ENCODE measurements at regions of chr6 and their contacts with region 1.

Region 1: DNA sequence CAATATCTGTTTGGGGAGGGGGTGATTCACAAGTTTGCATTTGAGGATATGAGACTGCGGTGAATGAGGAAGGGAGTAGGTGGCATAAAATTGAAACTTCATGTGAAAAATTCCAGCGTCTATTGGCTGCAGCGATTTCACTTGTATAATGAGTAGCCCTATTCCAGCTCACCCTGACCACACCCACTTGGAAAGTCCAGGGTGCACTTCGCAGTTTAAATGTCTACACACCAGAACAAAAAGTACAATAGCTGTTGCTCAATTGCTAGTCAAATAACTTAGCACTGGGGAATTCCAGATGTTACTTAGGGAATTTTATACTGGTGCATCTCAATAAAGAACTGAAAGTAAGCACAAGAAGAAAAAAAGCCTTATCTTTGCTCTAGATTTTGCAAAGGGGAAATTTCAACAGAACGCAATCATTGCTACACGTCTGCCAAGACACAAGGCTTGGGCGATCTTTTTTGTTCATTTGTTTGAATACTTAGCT is 6.3 kb downstream of the TNFAIP3 start:
- DNase-seq: peak; percentile 88
- H3K4me3 ChIP-seq: no peak overlapping the region
- H3K27ac ChIP-seq: peak overlapping the region; percentile 53
- H3K4me1 ChIP-seq: peaks cover 41% of the 10 kb centered on the region
- H3K27me3 ChIP-seq: no peaks in the 10 kb centered on the region
- CTCF ChIP-seq: no peak
- POLR2A ChIP-seq: peak; percentile 22

Region 2: GRCh38 chr6:137883400-137884148 is 10.3 kb after region 1 on chr6:
- CTCF ChIA-PET with region 1: interaction called, 8 read pairs
- POLR2A ChIA-PET with region 1: no interaction called
- dilution Hi-C with region 1: no loop called
- intact Hi-C with region 1: loop called (anchors 1 kb)
- DNase-seq: peak; percentile 79
- H3K4me3 ChIP-seq: no peak overlapping the region
- H3K27ac ChIP-seq: peak overlapping the region; percentile 72
- H3K4me1 ChIP-seq: peaks cover 16% of the 10 kb centered on the region
- H3K27me3 ChIP-seq: no peaks in the 10 kb centered on the region
- CTCF ChIP-seq: no peak
- POLR2A ChIP-seq: peak; percentile 54

Region 3: DNA sequence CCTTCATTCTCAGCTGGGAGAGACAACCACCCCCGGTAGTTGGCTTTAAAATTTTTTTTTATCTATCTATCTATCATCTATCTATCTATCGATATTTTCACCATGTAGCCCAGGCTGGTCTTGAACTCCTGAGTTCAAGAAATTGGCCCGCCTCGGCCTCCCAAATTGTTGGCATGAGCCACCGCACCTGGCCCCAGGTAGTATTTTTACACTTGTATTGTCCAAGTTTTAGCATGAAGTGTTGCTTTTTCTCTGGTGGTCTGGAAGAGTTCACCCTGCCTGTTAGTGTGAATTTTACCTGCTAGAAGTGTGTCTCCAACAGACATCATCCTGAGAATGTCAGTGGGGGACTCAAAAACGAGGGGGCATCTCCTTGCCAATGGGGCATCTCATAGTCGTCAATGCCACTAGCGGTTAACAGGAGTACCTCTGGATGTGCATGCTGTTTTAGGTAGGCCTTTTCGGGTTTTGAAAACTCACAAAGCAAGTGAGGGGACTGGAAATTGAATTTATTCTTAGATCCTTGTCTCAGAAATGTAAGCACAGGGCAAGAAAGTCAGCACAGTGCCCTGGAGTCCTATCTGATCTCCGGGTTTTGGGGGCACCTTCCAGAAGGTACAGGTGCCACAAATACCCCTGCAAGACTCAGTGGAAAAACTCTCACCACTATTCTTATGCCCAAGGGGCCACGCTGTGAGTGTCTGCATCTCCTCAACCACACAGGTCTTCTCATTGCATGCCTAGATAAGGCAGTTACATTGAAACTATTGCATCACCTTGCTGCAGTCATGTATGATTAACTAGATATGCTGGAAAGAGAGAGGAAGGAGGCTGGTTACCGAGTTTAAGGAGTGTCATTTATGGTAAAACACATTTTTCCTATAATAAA is 30.9 kb after region 1 on chr6:
- CTCF ChIA-PET with region 1: interaction called, 8 read pairs
- POLR2A ChIA-PET with region 1: no interaction called
- dilution Hi-C with region 1: no loop called
- intact Hi-C with region 1: loop called (anchors 5 kb)
- DNase-seq: peak; percentile 36
- H3K4me3 ChIP-seq: no peak overlapping the region
- H3K27ac ChIP-seq: no peak overlapping the region
- H3K4me1 ChIP-seq: peaks cover 18% of the 10 kb centered on the region
- H3K27me3 ChIP-seq: no peaks in the 10 kb centered on the region
- CTCF ChIP-seq: no peak
- POLR2A ChIP-seq: no peak

Region 4: GRCh38 chr6:137927777-137928218 is 54.5 kb after region 1 on chr6:
- CTCF ChIA-PET with region 1: interaction called, 3 read pairs
- POLR2A ChIA-PET with region 1: no interaction called
- dilution Hi-C with region 1: no loop called
- intact Hi-C with region 1: loop called (anchors 5 kb)
- DNase-seq: peak; percentile 52
- H3K4me3 ChIP-seq: no peak overlapping the region
- H3K27ac ChIP-seq: no peak overlapping the region
- H3K4me1 ChIP-seq: peaks cover 6% of the 10 kb centered on the region
- H3K27me3 ChIP-seq: no peaks in the 10 kb centered on the region
- CTCF ChIP-seq: no peak
- POLR2A ChIP-seq: no peak

Region 5: GRCh38 chr6:137938770-137939379 is 65.6 kb after region 1 on chr6:
- CTCF ChIA-PET with region 1: interaction called, 111 read pairs
- POLR2A ChIA-PET with region 1: no interaction called
- dilution Hi-C with region 1: no loop called
- intact Hi-C with region 1: no loop called
- DNase-seq: no peak
- H3K4me3 ChIP-seq: no peak overlapping the region
- H3K27ac ChIP-seq: no peak overlapping the region
- H3K4me1 ChIP-seq: no peaks in the 10 kb centered on the region
- H3K27me3 ChIP-seq: no peaks in the 10 kb centered on the region
- CTCF ChIP-seq: no peak
- POLR2A ChIP-seq: no peak